PC-9 (cell line): ENCODE measurements at regions of chrX and their contacts with region 1.

Region 1: DNA sequence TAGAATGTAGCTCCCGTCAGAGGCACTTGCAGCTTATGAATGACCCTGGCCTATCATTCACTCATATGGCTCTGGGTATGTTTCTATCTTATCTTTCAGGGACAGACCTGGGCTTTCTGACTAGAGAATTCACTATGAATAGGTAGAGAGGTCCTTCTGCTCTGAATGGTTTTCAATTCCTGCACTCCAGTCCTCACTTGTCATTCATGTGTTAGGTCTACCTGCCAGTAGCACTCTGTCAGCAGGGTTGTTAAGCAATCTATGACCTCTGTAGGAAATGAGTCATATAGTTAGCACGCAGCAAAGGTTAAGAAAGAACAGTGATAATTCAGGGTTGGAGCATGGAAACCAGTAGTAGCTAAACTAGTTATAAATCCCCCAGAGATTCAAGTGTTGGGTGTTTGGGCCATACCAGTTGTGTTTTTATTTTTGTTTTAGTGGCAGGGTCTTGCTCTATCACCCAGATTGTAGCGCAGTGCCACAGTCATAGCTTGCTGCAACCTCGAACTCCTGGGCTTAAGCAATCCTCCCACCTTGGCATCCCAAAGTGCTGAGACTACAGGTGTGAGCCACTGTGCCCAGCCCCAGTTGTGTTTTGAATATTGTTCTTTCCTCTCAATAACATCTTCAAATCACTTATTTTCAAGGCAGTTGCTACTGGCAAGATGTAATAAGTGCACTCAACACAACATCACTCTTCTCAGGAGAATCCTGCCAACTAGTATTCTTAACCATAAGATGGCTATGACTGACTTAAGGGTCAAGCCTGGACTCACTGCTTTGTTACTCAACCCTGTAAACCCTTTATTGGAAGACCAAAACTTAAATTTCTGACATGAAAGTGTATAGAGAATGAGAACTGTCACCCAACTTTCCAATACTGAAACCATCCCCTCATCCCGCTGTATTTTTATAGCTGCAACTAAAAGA is 25.1 kb downstream of the ARL13A start:
- DNase-seq: peak; percentile 34 to 91
- H3K4me3 ChIP-seq: no peak overlapping the region
- H3K27ac ChIP-seq: peak overlapping the region; percentile 71
- H3K4me1 ChIP-seq: peaks cover 36% of the 10 kb centered on the region
- H3K27me3 ChIP-seq: no peaks in the 10 kb centered on the region
- CTCF ChIP-seq: no peak

Region 2: GRCh38 chrX:99091459-99091858 is 1903.2 kb before region 1 on chrX:
- CTCF ChIA-PET with region 1: no interaction called
- POLR2A ChIA-PET with region 1: no interaction called
- intact Hi-C with region 1: no loop called
- DNase-seq: no peak
- H3K4me3 ChIP-seq: no peak overlapping the region
- H3K27ac ChIP-seq: no peak overlapping the region
- H3K4me1 ChIP-seq: no peaks in the 10 kb centered on the region
- H3K27me3 ChIP-seq: no peaks in the 10 kb centered on the region
- CTCF ChIP-seq: no peak

Region 3: GRCh38 chrX:100731441-100732281 is 263.0 kb before region 1 on chrX and contains the start of gene SYTL4:
- CTCF ChIA-PET with region 1: no interaction called
- POLR2A ChIA-PET with region 1: interaction called, 14 read pairs
- intact Hi-C with region 1: no loop called
- DNase-seq: peak in 1 of 2 experiments; percentile 52
- H3K4me3 ChIP-seq: peak within 1 kb of the TSS; percentile 77
- H3K27ac ChIP-seq: no peak within 1 kb of the TSS
- H3K4me1 ChIP-seq: no peaks in the 10 kb centered on the region
- H3K27me3 ChIP-seq: no peaks in the 10 kb centered on the region
- CTCF ChIP-seq: no peak
- total RNA-seq, gene SYTL4: 23.4 and 23.6 TPM in 2 replicates

Region 4: GRCh38 chrX:100911726-100912125 is 82.9 kb before region 1 on chrX:
- CTCF ChIA-PET with region 1: no interaction called
- POLR2A ChIA-PET with region 1: no interaction called
- intact Hi-C with region 1: loop called (anchors 5 kb)
- DNase-seq: peak; percentile 43 to 91
- H3K4me3 ChIP-seq: no peak overlapping the region; the same call in 1 of the 2 replicates
- H3K27ac ChIP-seq: peak overlapping the region; percentile 80
- H3K4me1 ChIP-seq: peaks cover 26% of the 10 kb centered on the region
- H3K27me3 ChIP-seq: no peaks in the 10 kb centered on the region
- CTCF ChIP-seq: no peak

Region 5: GRCh38 chrX:100980605-100981497 is 13.8 kb before region 1 on chrX:
- CTCF ChIA-PET with region 1: no interaction called
- POLR2A ChIA-PET with region 1: no interaction called
- intact Hi-C with region 1: loop called (anchors 1 kb)
- DNase-seq: peak; percentile 88 to 90
- H3K4me3 ChIP-seq: no peak overlapping the region
- H3K27ac ChIP-seq: peak overlapping the region; percentile 100
- H3K4me1 ChIP-seq: peaks cover 48% of the 10 kb centered on the region
- H3K27me3 ChIP-seq: no peaks in the 10 kb centered on the region
- CTCF ChIP-seq: no peak